GM12878 (cell line): ENCODE measurements at regions of chr4 and their contacts with region 1.

Region 1: GRCh38 chr4:55736605-55737183 is 82.9 kb upstream of the EXOC1L start:
- DNase-seq: no peak
- ATAC-seq: no peak
- H3K4me3 ChIP-seq: no peak overlapping the region
- H3K27ac ChIP-seq: no peak overlapping the region
- H3K4me1 ChIP-seq: no peaks in the 10 kb centered on the region
- H3K27me3 ChIP-seq: no peaks in the 10 kb centered on the region
- CTCF ChIP-seq: peak in 2 of 3 experiments; percentile 29 to 39; a peak in 2 of 6 replicates
- EP300 ChIP-seq: no peak
- POLR2A ChIP-seq: no peak
- RAD21 ChIP-seq: peak; percentile 51; the same call in 1 of the 2 replicates

Region 2: DNA sequence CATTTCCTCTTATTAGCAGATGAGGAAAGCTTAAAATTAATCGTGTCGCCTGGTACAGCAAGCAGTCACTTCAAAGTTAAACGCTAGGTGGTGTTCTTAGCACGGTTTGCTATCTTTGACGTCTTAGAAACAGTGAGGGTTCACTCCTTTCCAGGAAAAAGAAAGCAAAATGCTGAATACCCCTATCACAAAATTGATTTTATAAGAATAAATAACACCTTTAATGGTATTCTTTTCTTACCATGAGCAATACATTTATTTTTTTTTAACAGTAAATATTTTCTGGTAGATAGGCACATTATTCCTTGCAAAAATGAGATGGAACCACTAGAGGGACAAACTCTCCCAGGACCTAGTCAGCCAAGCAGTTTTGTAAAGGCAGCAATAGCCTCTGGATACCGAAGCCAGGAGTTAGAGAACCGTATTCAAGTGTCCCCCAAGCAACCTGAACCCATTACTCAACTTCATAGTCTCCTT is 765.2 kb before region 1 on chr4:
- CTCF ChIA-PET with region 1: no interaction called
- POLR2A ChIA-PET with region 1: no interaction called
- RAD21 ChIA-PET with region 1: no interaction called
- SMC1A ChIA-PET with region 1: interaction called, 4 read pairs
- in situ Hi-C with region 1: no loop called
- intact Hi-C with region 1: loop called (anchors 10 kb)
- DNase-seq: no peak
- ATAC-seq: peak; percentile 85
- H3K4me3 ChIP-seq: no peak overlapping the region
- H3K27ac ChIP-seq: no peak overlapping the region
- H3K4me1 ChIP-seq: no peaks in the 10 kb centered on the region
- H3K27me3 ChIP-seq: no peaks in the 10 kb centered on the region
- CTCF ChIP-seq: peak; percentile 23 to 50 (median 49); a peak in 5 of 6 replicates
- EP300 ChIP-seq: no peak
- POLR2A ChIP-seq: no peak
- RAD21 ChIP-seq: peak; percentile 56

Region 3: DNA sequence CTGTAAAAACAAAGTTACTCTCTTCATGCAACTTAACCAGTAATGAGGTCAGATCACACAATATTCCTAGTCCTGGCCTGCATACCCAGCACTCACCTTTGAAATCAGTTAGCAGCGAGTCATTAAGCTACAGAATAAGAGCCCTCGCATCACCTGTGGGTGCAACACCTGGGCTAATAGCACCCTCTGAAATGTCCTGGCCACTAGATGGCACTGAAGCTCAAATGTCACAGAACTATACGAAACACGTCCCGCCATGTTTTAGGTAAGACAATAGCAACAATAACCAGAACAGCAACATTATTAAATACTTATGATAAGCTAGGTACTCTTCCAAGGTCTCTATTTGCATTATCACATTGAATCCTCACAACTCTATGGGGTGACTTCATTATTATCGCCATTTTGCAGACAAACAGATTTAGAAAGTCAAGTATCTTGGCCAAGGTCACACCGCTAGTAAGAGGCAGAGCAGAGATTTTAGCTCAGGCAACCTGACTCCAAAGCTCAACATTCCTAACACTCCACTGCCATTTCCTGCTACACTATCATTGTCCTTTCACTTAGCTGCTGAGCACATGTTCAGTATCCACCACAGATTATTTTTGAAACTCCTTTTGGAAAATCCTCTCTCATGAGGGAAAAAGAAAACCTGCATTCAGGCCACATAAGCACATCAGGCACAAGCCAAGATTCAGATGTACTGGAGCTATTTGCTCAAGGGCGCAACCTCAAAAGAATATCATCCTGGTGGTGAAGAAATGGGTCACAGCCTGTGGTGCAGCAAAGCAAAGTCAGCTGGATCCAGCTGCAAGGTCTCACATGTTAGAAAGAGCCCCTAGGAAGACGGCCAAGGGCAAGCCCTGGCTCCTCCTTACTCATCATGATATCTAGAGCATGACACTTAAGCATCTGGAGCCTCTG is 551.8 kb before region 1 on chr4:
- CTCF ChIA-PET with region 1: no interaction called
- POLR2A ChIA-PET with region 1: no interaction called
- RAD21 ChIA-PET with region 1: no interaction called
- SMC1A ChIA-PET with region 1: no interaction called
- in situ Hi-C with region 1: no loop called
- intact Hi-C with region 1: loop called (anchors 5 kb)
- DNase-seq: no peak
- ATAC-seq: peak; percentile 67
- H3K4me3 ChIP-seq: no peak overlapping the region
- H3K27ac ChIP-seq: no peak overlapping the region
- H3K4me1 ChIP-seq: no peaks in the 10 kb centered on the region
- H3K27me3 ChIP-seq: no peaks in the 10 kb centered on the region
- CTCF ChIP-seq: peak; percentile 40 to 57 (median 43)
- EP300 ChIP-seq: no peak
- POLR2A ChIP-seq: no peak
- RAD21 ChIP-seq: peak; percentile 51

Region 4: DNA sequence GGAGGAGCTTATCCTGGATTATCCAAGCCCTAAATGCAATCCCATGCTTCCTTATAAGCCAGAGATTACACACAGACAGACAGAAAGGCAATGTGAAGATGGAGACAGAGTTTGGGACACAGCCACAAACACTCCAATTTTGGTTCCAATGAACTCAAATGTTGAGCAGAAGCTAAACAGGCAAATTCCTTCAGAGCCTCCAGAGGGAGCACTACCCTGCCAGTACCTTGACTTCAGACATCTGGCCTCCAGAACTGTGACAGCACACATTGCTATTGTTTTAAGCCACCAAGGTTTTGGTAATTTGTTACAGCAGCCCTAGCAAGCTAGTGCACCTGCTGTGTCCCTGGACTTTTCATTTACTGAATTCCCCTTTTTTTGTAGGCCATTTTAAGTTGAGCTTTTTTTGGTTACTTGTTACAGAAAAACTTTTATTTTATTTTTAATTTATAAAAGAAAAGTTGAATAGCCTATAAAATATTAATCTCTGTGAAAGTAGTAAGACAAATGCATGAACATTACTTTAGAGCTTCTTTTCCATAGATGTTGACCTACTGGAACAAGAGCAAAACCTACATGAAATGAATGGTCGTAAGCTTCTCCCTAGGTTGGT is 424.1 kb before region 1 on chr4:
- CTCF ChIA-PET with region 1: interaction called, 5 read pairs
- POLR2A ChIA-PET with region 1: no interaction called
- RAD21 ChIA-PET with region 1: interaction called, 3 read pairs
- SMC1A ChIA-PET with region 1: no interaction called
- in situ Hi-C with region 1: no loop called
- intact Hi-C with region 1: loop called (anchors 10 kb)
- DNase-seq: no peak
- ATAC-seq: peak; percentile 84
- H3K4me3 ChIP-seq: no peak overlapping the region
- H3K27ac ChIP-seq: no peak overlapping the region
- H3K4me1 ChIP-seq: no peaks in the 10 kb centered on the region
- H3K27me3 ChIP-seq: no peaks in the 10 kb centered on the region; a peak in 2 of 4 replicates
- CTCF ChIP-seq: peak; percentile 61 to 69 (median 69); a peak in 5 of 6 replicates
- EP300 ChIP-seq: no peak
- POLR2A ChIP-seq: no peak
- RAD21 ChIP-seq: peak; percentile 52

Region 5: DNA sequence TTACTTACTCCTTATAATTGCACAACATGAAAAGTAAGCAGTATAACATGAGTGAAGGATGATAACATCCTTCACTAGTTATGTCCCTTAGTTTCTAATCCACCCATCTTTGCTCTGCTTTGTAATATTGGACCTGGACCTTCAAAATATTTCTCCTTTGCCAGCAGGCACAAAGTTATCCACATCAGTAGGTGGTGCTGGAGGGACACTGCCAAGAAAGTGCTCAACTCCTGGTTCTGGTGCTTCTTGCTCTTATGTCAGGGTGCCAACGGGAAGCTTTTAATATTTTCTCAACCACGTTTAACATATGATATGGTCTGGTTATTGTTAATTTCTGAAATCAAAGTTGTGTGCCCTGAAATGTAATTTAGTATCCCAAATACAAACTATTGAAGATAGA is 291.9 kb before region 1 on chr4:
- CTCF ChIA-PET with region 1: no interaction called
- POLR2A ChIA-PET with region 1: no interaction called
- RAD21 ChIA-PET with region 1: no interaction called
- SMC1A ChIA-PET with region 1: interaction called, 5 read pairs
- in situ Hi-C with region 1: no loop called
- intact Hi-C with region 1: loop called (anchors 10 kb)
- DNase-seq: no peak
- ATAC-seq: no peak
- H3K4me3 ChIP-seq: no peak overlapping the region
- H3K27ac ChIP-seq: no peak overlapping the region
- H3K4me1 ChIP-seq: peaks cover 3% of the 10 kb centered on the region; the same call in 1 of the 2 replicates
- H3K27me3 ChIP-seq: no peaks in the 10 kb centered on the region
- CTCF ChIP-seq: peak; percentile 12 to 39 (median 14); a peak in 4 of 6 replicates
- EP300 ChIP-seq: no peak
- POLR2A ChIP-seq: no peak
- RAD21 ChIP-seq: peak; percentile 47